HEK293 (cell line): ENCODE measurements at regions of chr17 and their contacts with region 1.

Region 1: DNA sequence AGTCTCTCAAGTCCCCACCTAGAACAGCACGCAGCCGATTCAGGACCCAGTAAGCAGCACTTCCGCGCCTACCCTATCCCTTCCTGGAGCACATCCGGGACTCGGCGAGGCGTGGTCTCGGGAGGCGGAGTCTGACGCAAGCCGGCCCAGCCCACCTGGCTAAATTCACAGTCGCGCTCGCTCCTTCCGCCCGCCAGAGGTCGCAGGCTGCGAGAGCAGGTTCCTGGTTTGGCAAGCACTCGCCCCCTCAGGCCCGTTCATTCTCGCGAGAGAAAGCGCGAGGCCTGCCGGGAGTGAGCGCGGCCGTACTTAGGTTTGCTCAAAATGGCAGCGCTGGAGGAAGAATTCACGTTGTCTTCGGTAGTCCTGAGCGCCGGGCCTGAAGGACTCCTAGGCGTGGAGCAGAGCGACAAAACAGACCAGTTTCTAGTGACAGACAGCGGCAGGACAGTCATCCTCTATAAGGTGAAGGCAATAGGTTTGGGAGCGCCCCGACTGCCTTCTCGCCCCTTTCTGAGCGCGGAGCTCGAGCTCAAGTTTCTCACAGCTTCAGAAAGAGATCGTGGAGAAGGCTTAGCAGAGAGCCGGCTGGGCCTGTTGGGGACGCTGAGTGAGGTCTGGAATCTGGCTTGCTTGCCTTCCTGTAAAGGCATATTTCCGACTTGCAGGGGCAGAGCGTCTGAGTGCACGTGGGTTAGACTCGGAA is at the start of gene NOL11:
- H3K4me3 ChIP-seq: peak within 1 kb of the TSS; percentile 66
- H3K27ac ChIP-seq: peak within 1 kb of the TSS; percentile 90
- H3K4me1 ChIP-seq: peaks cover 12% of the 10 kb centered on the region; the same call in 1 of the 2 replicates
- CTCF ChIP-seq: peak; percentile 99

Region 2: DNA sequence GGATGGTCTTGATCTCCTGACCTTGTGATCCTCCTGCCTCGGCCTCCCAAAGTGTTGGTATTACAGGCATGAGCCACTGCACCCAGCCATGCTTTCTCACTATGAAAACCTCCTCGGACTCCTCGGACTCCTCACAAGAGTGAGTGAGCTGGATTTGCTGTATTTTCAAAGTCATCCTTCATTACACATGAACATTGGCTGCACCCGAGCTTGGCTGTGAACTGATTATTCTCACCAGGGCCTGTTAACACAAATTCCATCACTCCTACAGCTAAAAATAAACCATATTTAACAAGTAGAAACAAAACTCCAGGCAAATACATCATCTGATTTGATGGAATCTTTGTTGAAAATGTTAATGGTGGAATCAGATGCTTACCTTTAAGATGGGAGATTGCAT is 290.4 kb before region 1 on chr17:
- CTCF ChIA-PET with region 1: no interaction called
- POLR2A ChIA-PET with region 1: no interaction called
- H3K4me3 ChIP-seq: no peak overlapping the region
- H3K27ac ChIP-seq: no peak overlapping the region
- H3K4me1 ChIP-seq: peaks cover 7% of the 10 kb centered on the region
- CTCF ChIP-seq: no peak

Region 3: DNA sequence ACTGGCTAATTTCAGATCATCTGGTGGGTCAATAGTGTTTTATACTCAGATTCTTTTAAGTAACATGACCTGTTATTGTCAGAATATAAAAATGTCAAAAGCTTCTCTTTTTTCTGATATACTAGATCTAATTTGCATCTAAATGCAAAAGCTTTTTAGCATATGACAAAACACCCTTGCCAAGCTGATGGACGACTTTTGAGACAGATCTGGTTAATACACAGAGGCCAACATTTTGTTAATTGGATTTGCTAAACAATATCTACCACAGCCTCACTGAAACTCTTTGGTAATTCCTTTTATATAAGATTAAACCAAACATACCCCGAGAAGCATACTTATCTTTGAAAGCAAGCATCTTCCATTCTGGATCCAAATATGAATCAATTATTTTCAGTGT is 10.3 kb before region 1 on chr17:
- CTCF ChIA-PET with region 1: interaction called, 11 read pairs
- POLR2A ChIA-PET with region 1: interaction called, 9 read pairs
- H3K4me3 ChIP-seq: no peak overlapping the region
- H3K27ac ChIP-seq: no peak overlapping the region
- H3K4me1 ChIP-seq: peaks cover 7% of the 10 kb centered on the region; the same call in 1 of the 2 replicates
- CTCF ChIP-seq: no peak

Region 4: GRCh38 chr17:67765623-67766022 is 47.8 kb after region 1 on chr17:
- CTCF ChIA-PET with region 1: no interaction called
- POLR2A ChIA-PET with region 1: no interaction called
- H3K4me3 ChIP-seq: no peak overlapping the region
- H3K27ac ChIP-seq: no peak overlapping the region
- H3K4me1 ChIP-seq: no peaks in the 10 kb centered on the region
- CTCF ChIP-seq: no peak